Adrenal gland (tissue), 19 donors: ENCODE measurements at regions of chr14 and their contacts with region 1.

Region 1: GRCh38 chr14:74860906-74861733 is 14.8 kb downstream of the PROX2 start:
- DNase-seq: peak; percentile 84 to 98 (median 92)
- H3K4me3 ChIP-seq: no peak overlapping the region
- H3K27ac ChIP-seq: no peak overlapping the region
- H3K4me1 ChIP-seq: no peaks in the 10 kb centered on the region
- H3K27me3 ChIP-seq: no peaks in the 10 kb centered on the region
- CTCF ChIP-seq: peak; percentile 78 to 88 (median 82)
- POLR2A ChIP-seq: no peak

Region 2: GRCh38 chr14:74905375-74906142 is 44.4 kb after region 1 on chr14:
- intact Hi-C with region 1: loop called (anchors 5 kb)
- DNase-seq: peak; percentile 69 to 91 (median 77)
- H3K4me3 ChIP-seq: no peak overlapping the region
- H3K27ac ChIP-seq: no peak overlapping the region
- H3K4me1 ChIP-seq: peaks cover 0 to 6% of the 10 kb centered on the region in 2 donors
- H3K27me3 ChIP-seq: no peaks in the 10 kb centered on the region
- CTCF ChIP-seq: peak; percentile 89 to 96 (median 94)
- POLR2A ChIP-seq: no peak

Region 3: GRCh38 chr14:74988131-74988530 is 127.0 kb after region 1 on chr14:
- intact Hi-C with region 1: no loop called
- DNase-seq: peak in 1 of 7 donors; percentile 35
- H3K4me3 ChIP-seq: no peak overlapping the region
- H3K27ac ChIP-seq: no peak overlapping the region
- H3K4me1 ChIP-seq: no peaks in the 10 kb centered on the region
- H3K27me3 ChIP-seq: no peaks in the 10 kb centered on the region
- CTCF ChIP-seq: no peak
- POLR2A ChIP-seq: no peak